AG04449 (cell line): ENCODE measurements at regions of chr1 and their contacts with region 1.

Region 1: DNA sequence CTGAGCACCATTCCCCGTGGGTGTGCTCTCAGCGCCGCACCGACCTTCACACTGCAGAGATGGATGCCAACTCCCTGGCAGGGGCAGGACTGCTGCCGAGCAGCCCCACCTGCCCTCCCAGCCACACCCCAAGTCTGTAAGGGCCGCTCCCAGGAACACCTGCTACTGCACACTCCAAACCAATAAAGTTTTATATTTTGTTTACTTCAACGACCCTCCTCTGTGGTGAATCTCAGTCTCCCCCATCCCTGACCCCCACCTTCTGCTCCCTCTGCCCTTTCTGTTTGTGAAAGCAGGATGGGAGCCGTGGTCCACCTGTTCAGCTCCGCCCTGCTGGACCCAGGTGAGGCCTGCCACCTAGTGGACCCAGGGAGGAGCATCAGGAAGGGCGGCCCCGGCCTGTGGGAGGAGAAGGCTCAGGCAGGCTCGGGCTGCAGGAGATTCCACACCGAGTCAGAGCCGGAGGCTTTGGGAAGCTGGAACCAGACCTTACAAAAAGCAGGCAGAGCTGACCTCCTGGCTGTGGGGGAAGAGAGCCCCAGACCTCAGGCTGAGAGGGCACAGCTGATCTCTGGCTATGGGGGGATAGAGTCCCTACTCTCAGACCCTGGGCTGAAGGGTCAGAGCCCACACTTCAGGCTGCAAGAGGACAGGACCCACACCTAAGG is 982 bp upstream of the TMEM82 start:
- DNase-seq: no peak
- H3K4me3 ChIP-seq: no peak overlapping the region
- CTCF ChIP-seq: peak; percentile 90

Region 2: GRCh38 chr1:15515022-15515663 is 226.2 kb before region 1 on chr1:
- CTCF ChIA-PET with region 1: no interaction called
- POLR2A ChIA-PET with region 1: no interaction called
- DNase-seq: no peak
- H3K4me3 ChIP-seq: no peak overlapping the region
- CTCF ChIP-seq: no peak

Region 3: DNA sequence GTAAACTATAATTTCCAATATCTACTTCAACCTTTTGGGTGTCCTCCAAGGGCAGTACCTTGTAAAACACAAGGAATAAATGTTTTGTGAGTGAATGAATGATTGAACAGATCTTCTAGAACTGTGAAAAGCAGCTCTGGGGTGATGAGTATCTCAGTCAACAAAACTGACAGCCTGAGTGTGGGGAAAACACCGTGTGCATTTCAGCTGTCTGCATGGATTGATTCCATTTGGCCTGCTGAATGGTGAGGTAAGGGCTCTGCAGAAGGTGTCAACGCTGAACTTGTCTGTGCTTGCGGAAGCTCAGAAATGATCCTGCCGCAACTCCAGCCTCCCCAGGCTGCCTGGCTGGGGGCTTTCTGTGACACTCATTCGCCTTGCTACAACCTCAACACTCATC is 149.0 kb before region 1 on chr1:
- CTCF ChIA-PET with region 1: interaction called, 42 read pairs
- POLR2A ChIA-PET with region 1: no interaction called
- DNase-seq: no peak
- H3K4me3 ChIP-seq: no peak overlapping the region
- CTCF ChIP-seq: no peak

Region 4: GRCh38 chr1:15756143-15757015 is 15.1 kb after region 1 on chr1:
- CTCF ChIA-PET with region 1: interaction called, 11 read pairs
- POLR2A ChIA-PET with region 1: interaction called, 3 read pairs
- DNase-seq: no peak
- H3K4me3 ChIP-seq: no peak overlapping the region
- CTCF ChIP-seq: no peak

Region 5: GRCh38 chr1:16491056-16491962 is 750.0 kb after region 1 on chr1:
- CTCF ChIA-PET with region 1: no interaction called
- POLR2A ChIA-PET with region 1: no interaction called
- DNase-seq: no peak
- H3K4me3 ChIP-seq: no peak overlapping the region
- CTCF ChIP-seq: no peak